ENCODE measurements at regions of chr3 and their contacts with region 1.

Region 1: GRCh38 chr3:139561959-139562676 is 22.6 kb upstream of the RBP1 start:
- DNase-seq: no peak
- ATAC-seq: peak; percentile 76

Region 2: DNA sequence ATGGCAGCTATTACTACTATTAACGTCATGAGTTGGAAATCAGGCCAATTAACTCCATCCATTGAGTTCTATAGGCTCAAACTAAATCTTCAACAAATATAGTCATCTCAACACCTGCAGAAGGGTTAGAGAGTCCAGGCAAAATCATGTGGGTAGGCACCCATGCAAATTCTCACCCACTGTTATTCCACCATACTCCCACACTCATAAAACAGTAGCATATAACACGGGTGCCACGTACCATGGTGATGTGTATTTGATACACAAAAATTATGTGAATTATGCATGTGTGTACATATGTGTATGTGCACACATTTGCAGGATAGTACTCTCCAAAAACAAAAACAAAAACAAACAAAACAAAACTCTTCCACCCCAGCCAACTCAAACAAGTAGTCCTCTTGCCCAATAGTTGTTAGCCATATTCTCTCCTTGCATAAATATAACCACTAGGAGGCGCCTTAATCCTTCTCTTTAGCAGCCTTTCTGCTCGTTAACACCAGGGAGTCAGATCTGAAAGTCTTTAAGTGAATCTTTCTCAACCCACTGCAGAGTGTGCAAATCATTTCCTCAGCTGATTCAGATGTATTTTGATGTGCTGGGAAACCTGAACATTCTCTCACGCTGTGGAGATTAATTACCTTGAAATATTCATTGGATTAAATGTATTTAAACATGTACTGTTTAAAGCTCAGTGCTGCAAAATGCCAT is 134.7 kb before region 1 on chr3:
- intact Hi-C with region 1: loop called (anchors 2 kb)
- DNase-seq: no peak
- ATAC-seq: peak; percentile 87

Region 3: GRCh38 chr3:139448104-139448503 is 114.0 kb before region 1 on chr3:
- intact Hi-C with region 1: no loop called
- DNase-seq: no peak
- ATAC-seq: peak; percentile 50